ENCODE measurements at regions of chr11 and their contacts with region 1.

Region 1: GRCh38 chr11:85307366-85307765 is 319.8 kb downstream of the DLG2 start:
- DNase-seq: no peak
- H3K4me3 ChIP-seq: no peak overlapping the region
- H3K27ac ChIP-seq: no peak overlapping the region
- H3K4me1 ChIP-seq: no peaks in the 10 kb centered on the region
- H3K27me3 ChIP-seq: no peaks in the 10 kb centered on the region
- CTCF ChIP-seq: no peak
- POLR2A ChIP-seq: no peak

Region 2: GRCh38 chr11:84824624-84825023 is 482.7 kb before region 1 on chr11:
- intact Hi-C with region 1: loop called (anchors 5 kb)
- DNase-seq: no peak
- H3K4me3 ChIP-seq: no peak overlapping the region
- H3K27ac ChIP-seq: no peak overlapping the region
- H3K4me1 ChIP-seq: no peaks in the 10 kb centered on the region
- H3K27me3 ChIP-seq: no peaks in the 10 kb centered on the region
- CTCF ChIP-seq: no peak
- POLR2A ChIP-seq: no peak

Region 3: DNA sequence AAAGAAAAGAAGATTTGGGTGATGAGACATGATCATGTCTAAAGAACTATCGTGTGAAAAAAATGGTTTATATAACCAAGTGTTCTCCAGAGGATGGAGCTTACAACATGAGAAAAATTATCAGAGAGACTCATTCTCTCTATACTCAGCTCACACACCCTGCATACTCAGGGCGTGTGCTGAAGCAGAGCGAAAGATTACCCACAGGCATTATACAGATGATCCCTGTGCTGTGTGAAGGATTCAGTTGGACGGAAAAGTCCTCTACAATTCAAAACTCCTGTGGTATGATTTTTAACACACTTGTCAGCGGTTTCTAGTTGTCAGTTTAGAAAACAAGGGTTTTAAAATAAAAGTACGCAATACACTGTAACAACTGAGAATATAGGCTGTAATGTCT is 52.5 kb after region 1 on chr11:
- intact Hi-C with region 1: no loop called
- DNase-seq: no peak
- H3K4me3 ChIP-seq: no peak overlapping the region
- H3K27ac ChIP-seq: no peak overlapping the region
- H3K4me1 ChIP-seq: no peaks in the 10 kb centered on the region
- H3K27me3 ChIP-seq: no peaks in the 10 kb centered on the region
- CTCF ChIP-seq: no peak
- POLR2A ChIP-seq: no peak